ENCODE measurements at regions of chr7 and their contacts with region 1.

Region 1: GRCh38 chr7:131302876-131303707 is 24.6 kb upstream of the MKLN1 start:
- DNase-seq: peak; percentile 42
- ATAC-seq: no peak
- H3K4me3 ChIP-seq: no peak overlapping the region
- H3K4me3 Mint-ChIP-seq: no peak overlapping the region
- H3K27ac ChIP-seq: no peak overlapping the region
- H3K27ac Mint-ChIP-seq: no peak overlapping the region
- H3K4me1 ChIP-seq: no peaks in the 10 kb centered on the region
- H3K4me1 Mint-ChIP-seq: peaks cover 2% of the 10 kb centered on the region
- H3K27me3 ChIP-seq: no peaks in the 10 kb centered on the region
- H3K27me3 Mint-ChIP-seq: no peaks in the 10 kb centered on the region
- CTCF ChIP-seq: peak; percentile 41

Region 2: GRCh38 chr7:131027287-131027773 is 275.8 kb before region 1 on chr7:
- CTCF ChIA-PET with region 1: no interaction called
- POLR2A ChIA-PET with region 1: no interaction called
- intact Hi-C with region 1: no loop called
- DNase-seq: peak; percentile 60
- ATAC-seq: peak; percentile 14
- H3K4me3 ChIP-seq: no peak overlapping the region
- H3K4me3 Mint-ChIP-seq: peak overlapping the region; percentile 38
- H3K27ac ChIP-seq: peak overlapping the region; percentile 68 to 93
- H3K27ac Mint-ChIP-seq: peak overlapping the region; percentile 83
- H3K4me1 ChIP-seq: peaks cover 75 to 87% of the 10 kb centered on the region in 2 donors
- H3K4me1 Mint-ChIP-seq: peaks cover 85% of the 10 kb centered on the region
- H3K27me3 ChIP-seq: no peaks in the 10 kb centered on the region
- H3K27me3 Mint-ChIP-seq: no peaks in the 10 kb centered on the region
- CTCF ChIP-seq: no peak

Region 3: DNA sequence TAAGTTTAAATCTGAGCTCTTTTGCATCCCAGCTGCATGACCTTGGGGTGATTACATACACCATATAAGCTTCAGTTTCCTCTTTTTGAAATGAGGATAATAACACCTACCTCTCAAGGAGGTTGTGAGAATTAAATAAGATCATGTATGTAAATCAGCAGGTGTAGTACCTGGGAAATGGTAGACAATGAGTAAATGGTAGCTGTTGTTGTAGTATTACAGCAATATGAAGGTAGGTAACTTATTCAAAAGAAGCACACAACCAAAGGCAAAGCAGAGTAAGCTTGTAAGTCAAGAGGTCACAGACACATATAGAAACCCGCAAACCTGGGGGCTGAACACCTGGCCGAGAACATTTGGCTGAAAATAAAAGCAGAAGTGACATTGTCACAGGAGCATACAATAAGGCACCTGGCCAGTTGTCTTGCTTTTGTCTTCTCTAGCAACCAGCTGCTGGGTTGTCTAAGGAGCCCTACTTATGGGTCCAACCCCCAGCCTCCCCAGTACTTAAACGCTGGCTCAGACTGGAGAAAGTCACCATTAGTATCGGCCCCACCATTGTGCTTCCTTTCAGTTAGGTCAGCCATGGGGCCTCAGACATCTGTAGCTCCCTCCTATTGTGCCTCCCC is 179.0 kb before region 1 on chr7:
- CTCF ChIA-PET with region 1: interaction called, 13 read pairs
- POLR2A ChIA-PET with region 1: interaction called, 3 read pairs
- intact Hi-C with region 1: no loop called
- DNase-seq: peak; percentile 92
- ATAC-seq: peak; percentile 84
- H3K4me3 ChIP-seq: peak overlapping the region in 2 of 5 experiments; percentile 11
- H3K4me3 Mint-ChIP-seq: peak overlapping the region; percentile 66
- H3K27ac ChIP-seq: peak overlapping the region; percentile 74 to 77
- H3K27ac Mint-ChIP-seq: peak overlapping the region; percentile 90
- H3K4me1 ChIP-seq: peaks cover 37 to 38% of the 10 kb centered on the region in 2 donors
- H3K4me1 Mint-ChIP-seq: peaks cover 39% of the 10 kb centered on the region
- H3K27me3 ChIP-seq: no peaks in the 10 kb centered on the region
- H3K27me3 Mint-ChIP-seq: no peaks in the 10 kb centered on the region
- CTCF ChIP-seq: no peak

Region 4: GRCh38 chr7:131409129-131409766 is 106.2 kb after region 1 on chr7:
- CTCF ChIA-PET with region 1: no interaction called
- POLR2A ChIA-PET with region 1: no interaction called
- intact Hi-C with region 1: no loop called
- DNase-seq: no peak
- ATAC-seq: no peak
- H3K4me3 ChIP-seq: no peak overlapping the region
- H3K4me3 Mint-ChIP-seq: no peak overlapping the region
- H3K27ac ChIP-seq: no peak overlapping the region
- H3K27ac Mint-ChIP-seq: no peak overlapping the region
- H3K4me1 ChIP-seq: no peaks in the 10 kb centered on the region
- H3K4me1 Mint-ChIP-seq: peaks cover 5% of the 10 kb centered on the region
- H3K27me3 ChIP-seq: no peaks in the 10 kb centered on the region
- H3K27me3 Mint-ChIP-seq: no peaks in the 10 kb centered on the region
- CTCF ChIP-seq: no peak

Measured in B cell (primary cell).